AG04450 (cell line): ENCODE measurements at regions of chr7 and their contacts with region 1.

Region 1: DNA sequence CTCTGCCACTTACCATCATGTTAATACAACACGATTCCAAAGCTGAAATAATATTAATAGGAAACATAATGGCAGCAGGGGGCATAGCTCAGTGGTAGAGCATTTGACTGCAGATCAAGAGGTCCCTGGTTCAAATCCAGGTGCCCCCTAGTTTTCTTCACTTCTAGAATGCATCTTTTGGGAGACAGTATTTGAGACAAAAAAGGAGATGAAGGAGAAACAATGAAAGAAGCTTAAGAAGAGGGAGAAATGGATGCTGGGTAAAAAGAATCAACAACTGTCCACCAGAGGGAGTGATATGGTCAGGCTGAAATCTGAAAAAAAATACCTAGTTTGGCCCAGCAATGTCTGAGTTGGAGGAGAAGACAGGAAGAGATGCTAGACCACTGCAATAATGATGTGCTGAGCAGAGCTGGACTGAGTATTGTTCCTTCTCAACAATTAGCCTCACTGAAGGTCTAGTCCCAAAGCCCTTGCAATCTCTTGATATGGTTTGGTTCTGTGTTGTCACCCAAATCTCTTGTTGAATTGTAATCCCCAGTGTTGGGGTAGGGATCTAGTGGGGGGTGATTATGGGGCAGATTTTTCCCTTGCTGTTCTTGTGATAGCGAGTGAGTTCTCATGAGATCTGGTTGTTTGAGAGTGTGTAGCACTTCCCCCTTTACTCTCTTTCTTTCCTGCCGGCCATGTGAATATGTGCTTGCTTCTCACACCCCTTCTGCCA is 48.3 kb downstream of the ZNF783 start:
- DNase-seq: peak; percentile 50
- H3K4me3 ChIP-seq: no peak overlapping the region
- H3K27ac ChIP-seq: no peak overlapping the region
- H3K27me3 ChIP-seq: no peaks in the 10 kb centered on the region
- CTCF ChIP-seq: peak; percentile 76

Region 2: GRCh38 chr7:148468700-148469098 is 841.6 kb before region 1 on chr7:
- CTCF ChIA-PET with region 1: no interaction called
- POLR2A ChIA-PET with region 1: no interaction called
- DNase-seq: no peak
- H3K4me3 ChIP-seq: no peak overlapping the region
- H3K27ac ChIP-seq: no peak overlapping the region
- H3K27me3 ChIP-seq: no peaks in the 10 kb centered on the region
- CTCF ChIP-seq: no peak

Region 3: GRCh38 chr7:149161241-149161848 is 148.9 kb before region 1 on chr7:
- CTCF ChIA-PET with region 1: no interaction called
- POLR2A ChIA-PET with region 1: no interaction called
- DNase-seq: no peak
- H3K4me3 ChIP-seq: no peak overlapping the region
- H3K27ac ChIP-seq: no peak overlapping the region
- H3K27me3 ChIP-seq: no peaks in the 10 kb centered on the region
- CTCF ChIP-seq: no peak

Region 4: DNA sequence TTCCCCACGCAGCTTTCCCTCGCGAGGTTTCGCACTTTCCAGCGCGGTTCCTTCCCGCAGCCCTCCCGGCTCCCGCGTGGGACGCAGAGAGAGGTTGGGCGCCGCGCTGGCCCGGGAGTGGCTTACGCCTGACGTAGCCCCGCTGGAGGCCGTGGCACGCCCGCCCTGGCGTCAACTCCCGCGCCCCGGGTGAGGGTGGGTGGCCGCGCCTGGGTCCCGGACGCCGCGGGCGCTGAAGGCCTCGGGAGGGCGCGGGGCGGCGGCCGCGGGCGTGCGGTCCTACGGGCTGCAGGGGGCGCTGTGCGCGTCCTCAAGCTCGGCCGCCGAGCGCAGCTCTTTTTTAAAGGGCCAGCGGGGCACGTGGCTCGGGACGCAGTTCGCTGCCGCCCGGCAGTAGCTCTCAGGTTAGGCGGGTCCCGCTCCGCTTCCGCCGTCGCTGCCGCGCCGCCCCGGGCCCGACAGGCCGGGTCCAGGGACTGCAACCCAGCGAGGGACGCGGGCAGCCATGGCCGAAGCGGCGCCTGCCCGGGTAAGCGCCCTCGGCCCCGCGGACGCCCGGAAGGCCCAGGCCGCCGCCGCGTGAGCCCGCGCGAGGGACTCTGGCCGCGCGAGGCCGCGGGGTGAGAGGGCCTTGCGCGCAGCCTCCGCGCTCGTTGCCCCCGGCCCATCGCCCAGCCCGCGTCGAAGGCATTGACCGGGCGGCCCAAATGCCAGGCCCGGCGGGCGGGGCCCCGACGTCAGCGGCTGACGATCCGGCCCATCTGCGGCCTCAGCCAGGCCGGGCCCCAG is 48.3 kb before region 1 on chr7 and contains the start of gene ZNF783:
- CTCF ChIA-PET with region 1: no interaction called
- POLR2A ChIA-PET with region 1: no interaction called
- DNase-seq: peak; percentile 73
- H3K4me3 ChIP-seq: peak within 1 kb of the TSS; percentile 60
- H3K27ac ChIP-seq: peak within 1 kb of the TSS; percentile 86
- H3K27me3 ChIP-seq: no peaks in the 10 kb centered on the region
- CTCF ChIP-seq: peak; percentile 54
- polyA plus RNA-seq, gene ZNF783: 5.2 TPM in 2 replicates

Region 5: DNA sequence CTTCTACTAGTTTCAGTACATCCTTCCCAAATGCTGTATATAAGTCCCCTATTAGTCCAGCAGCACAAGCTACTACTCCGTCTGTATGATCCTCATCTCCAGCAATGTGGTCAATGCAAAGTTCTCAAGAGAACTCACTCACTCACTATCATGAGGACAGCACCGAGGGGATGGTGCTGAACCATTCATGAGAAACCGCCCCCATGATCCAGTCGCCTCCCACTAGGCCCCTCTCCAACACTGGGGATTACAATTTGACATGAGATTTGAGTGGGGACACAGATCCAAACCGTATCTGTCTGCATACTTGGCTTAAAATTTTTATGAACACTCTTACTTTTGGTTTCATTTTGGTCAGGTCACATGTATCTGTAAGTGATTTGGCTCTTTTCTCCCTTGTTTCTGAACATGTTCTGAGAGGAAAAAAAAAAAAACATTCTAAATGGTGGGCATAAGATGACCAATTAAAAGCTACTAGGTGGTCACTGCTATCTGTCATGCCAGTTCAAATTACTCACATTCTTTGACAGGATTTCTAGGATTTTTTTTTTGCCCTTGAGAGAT is 11.8 kb after region 1 on chr7:
- CTCF ChIA-PET with region 1: interaction called, 34 read pairs
- POLR2A ChIA-PET with region 1: no interaction called
- DNase-seq: no peak
- H3K4me3 ChIP-seq: peak overlapping the region; percentile 42
- H3K27ac ChIP-seq: no peak overlapping the region
- H3K27me3 ChIP-seq: peaks cover 2% of the 10 kb centered on the region
- CTCF ChIP-seq: no peak

Region 6: DNA sequence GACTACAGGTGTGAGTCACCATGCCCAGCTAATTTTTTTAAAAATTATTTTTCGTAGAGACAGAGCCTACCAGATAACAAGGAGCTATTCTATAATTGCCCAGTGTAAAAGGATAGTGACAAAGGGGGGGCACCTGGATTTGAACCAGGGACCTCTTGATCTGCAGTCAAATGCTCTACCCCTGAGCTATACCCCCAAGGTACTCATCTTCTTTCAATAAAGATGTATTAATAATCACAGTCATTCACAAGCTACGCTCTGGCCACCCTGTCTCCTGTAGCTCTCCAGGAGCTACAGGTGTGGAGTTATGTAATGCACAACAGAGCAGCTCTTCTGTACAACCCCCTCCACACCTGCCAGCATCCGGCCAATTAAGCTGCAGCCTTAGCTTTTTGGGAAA is 67.1 kb after region 1 on chr7:
- CTCF ChIA-PET with region 1: interaction called, 10 read pairs
- POLR2A ChIA-PET with region 1: no interaction called
- DNase-seq: no peak
- H3K4me3 ChIP-seq: no peak overlapping the region
- H3K27ac ChIP-seq: no peak overlapping the region
- H3K27me3 ChIP-seq: no peaks in the 10 kb centered on the region
- CTCF ChIP-seq: no peak

Region 7: DNA sequence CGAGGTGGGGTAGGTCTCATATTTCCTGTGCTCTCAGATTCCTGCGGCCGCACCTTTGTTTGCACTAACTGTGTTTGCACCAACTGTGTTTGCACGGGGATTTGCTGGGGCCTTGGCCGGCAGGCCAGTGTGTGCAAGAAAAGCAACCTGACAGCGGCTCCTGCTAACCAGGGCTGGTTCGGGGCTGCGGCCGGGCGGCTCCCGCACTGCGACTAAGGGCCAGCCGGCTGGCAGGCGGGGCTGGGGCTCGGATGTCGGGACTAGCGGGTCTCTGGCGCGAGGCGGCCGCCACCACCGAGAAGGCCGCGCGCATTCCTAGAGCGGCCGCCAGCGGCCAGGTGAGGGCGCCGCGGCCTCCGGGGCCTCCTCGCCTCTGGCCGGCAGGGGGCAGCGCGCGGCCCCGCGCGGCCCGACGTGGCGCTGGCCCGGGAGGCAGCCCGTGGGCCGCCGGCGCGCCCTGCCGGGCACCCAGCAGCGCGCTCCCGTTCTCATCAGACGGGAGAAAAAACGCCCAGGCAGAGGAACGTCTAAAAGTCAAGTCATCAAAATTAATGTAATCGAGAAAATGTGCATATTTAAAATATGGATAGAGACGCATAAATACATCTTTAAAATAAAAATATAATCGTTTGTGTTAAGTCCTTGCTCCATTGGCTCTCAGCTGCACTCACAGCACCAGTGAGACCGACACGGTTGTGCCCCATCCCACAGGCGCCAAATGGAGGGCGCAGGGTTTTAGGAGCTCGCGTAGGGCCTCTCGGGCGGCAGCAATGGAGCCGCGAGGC is 112.0 kb after region 1 on chr7:
- CTCF ChIA-PET with region 1: interaction called, 21 read pairs
- POLR2A ChIA-PET with region 1: no interaction called
- DNase-seq: peak; percentile 2
- H3K4me3 ChIP-seq: peak overlapping the region; percentile 43
- H3K27ac ChIP-seq: no peak overlapping the region
- H3K27me3 ChIP-seq: no peaks in the 10 kb centered on the region
- CTCF ChIP-seq: no peak; the same call in 1 of the 2 replicates

Region 8: DNA sequence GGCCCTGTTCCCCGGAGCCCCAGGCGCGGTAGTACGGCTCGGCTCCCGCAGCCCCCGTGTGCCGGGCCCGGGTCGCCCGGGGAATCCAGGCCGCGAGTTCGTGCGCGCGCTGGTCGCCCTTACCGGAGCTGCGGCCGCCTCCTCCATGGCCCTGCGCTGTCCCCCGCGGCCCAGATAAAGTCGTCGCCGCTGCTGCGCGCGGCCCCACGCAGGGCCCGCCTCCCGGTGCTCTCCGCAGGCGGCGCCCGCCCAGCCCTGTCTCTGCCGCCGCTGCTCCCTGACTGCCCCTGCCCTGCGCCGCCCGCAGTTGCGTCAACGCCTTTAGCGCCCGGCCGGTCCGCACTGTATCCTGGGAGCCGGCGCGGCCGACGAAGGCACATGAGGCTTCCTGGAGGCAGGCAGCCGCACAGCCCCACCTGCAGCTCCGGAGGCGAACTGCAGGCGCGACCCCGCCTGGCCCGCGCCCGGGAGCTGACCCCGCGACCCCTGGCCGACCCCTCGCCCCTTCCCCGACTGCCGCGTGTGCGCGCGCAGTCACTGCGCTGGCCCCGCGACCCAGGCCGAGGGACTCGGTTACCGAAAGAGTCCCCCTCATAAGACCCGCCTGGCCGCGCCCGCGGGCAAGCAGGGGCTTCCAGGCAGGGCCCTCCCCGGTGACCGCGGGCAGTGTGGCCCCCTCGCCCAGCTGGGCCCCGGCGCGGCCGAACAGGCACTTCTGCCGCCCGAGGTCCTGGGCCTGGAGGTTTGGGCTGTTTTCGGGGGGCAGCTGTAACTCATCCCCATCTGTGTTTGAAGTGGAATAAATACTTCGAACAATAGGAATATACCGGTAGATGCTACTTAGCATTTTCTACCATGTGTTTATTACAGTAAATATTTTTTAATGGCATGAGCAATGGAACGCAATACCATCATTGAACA is 314.4 kb after region 1 on chr7:
- CTCF ChIA-PET with region 1: interaction called, 16 read pairs
- POLR2A ChIA-PET with region 1: no interaction called
- DNase-seq: peak; percentile 74
- H3K4me3 ChIP-seq: peak overlapping the region; percentile 71
- H3K27ac ChIP-seq: peak overlapping the region; percentile 31
- H3K27me3 ChIP-seq: peaks cover under 1% of the 10 kb centered on the region
- CTCF ChIP-seq: peak; percentile 77